ENCODE measurements at regions of chr5 and their contacts with region 1.

Region 1: GRCh38 chr5:140647042-140647341 is 438 bp downstream of the NDUFA2 start:
- DNase-seq: no peak
- H3K4me3 ChIP-seq: peak overlapping the region; percentile 64 to 93 (median 86)
- H3K27ac ChIP-seq: peak overlapping the region; percentile 84 to 91 (median 90)
- H3K4me1 ChIP-seq: peaks cover 7 to 58% (median 8%) of the 10 kb centered on the region in 3 donors
- H3K27me3 ChIP-seq: no peaks in the 10 kb centered on the region
- CTCF ChIP-seq: no peak
- POLR2A ChIP-seq: no peak

Region 2: DNA sequence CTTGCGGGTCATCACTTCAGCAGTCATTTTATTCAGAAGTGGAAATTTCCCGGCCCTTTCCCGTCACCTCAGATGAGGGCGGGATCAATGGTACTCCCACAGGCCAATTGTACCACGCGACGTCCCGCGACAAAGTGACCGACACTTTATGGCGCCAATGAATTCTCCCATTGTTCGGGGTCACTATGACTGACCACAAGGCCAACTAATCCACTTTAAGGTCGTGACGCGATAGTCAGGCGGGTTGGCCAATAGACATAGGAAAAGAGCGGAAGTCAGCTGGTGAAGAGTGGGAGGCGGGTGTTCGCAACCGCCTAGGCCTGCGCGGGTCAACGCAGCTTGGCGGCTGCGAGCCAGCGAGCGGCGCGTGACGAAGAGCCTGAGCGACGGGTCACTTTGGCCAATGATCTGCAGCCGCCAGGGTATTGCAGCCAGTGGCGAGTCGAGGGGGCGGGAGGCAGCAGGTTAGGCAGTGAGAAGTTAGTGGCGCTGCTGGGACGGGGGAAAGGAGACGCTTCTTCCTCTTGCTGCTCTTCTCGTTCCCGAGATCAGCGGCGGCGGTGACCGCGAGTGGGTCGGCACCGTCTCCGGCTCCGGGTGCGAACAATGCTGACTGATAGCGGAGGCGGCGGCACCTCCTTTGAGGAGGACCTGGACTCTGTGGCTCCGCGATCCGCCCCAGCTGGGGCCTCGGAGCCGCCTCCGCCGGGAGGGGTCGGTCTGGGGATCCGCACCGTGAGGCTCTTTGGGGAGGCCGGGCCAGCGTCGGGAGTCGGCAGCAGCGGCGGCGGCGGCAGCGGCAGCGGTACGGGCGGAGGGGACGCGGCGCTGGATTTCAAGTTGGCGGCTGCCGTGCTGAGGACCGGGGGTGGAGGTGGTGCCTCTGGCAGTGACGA is 245.4 kb before region 1 on chr5 and contains the start of gene ANKHD1:
- intact Hi-C with region 1: loop called (anchors 10 kb)
- DNase-seq: peak; percentile 97
- H3K4me3 ChIP-seq: peak within 1 kb of the TSS; percentile 74 to 91 (median 88)
- H3K27ac ChIP-seq: peak within 1 kb of the TSS; percentile 92 to 98 (median 97)
- H3K4me1 ChIP-seq: peaks cover 16 to 73% (median 40%) of the 10 kb centered on the region in 3 donors
- H3K27me3 ChIP-seq: no peaks in the 10 kb centered on the region
- CTCF ChIP-seq: peak in 2 of 6 experiments; percentile 19 to 23
- POLR2A ChIP-seq: peak in 3 of 4 donors; percentile 95 to 100 (median 98)
- total RNA-seq, gene ANKHD1: 55.7 to 130 (median 87.2) TPM

Measured in esophagus squamous epithelium (tissue), 5 donors.